PC-3 (cell line): ENCODE measurements at regions of chr13 and their contacts with region 1.

Region 1: GRCh38 chr13:68439821-68440220 is 1209.7 kb upstream of the PCDH9 start:
- DNase-seq: peak; percentile 85
- ATAC-seq: peak; percentile 90
- H3K4me3 ChIP-seq: no peak overlapping the region
- H3K27ac ChIP-seq: no peak overlapping the region
- H3K4me1 ChIP-seq: peaks cover 17% of the 10 kb centered on the region
- H3K27me3 ChIP-seq: no peaks in the 10 kb centered on the region
- CTCF ChIP-seq: no peak

Region 2: DNA sequence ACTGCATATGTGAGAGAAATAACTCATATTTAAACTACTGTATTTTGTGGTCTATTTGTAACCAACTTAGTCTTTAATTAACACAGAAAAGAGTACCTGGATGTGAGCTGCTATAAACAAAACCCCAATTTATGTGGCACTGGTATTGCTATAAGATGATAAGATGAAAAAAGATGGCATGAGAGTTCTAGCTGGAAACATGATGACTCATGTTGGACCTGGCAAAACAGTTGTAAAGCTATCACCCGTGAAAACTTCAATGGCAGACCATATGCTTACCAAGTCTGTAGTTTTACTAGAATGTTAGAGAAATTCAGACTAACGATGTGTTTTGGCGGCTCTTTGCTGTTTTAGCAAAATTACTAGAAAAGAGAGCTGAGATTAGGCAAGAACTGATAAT is 1140.1 kb before region 1 on chr13:
- CTCF ChIA-PET with region 1: no interaction called
- POLR2A ChIA-PET with region 1: no interaction called
- intact Hi-C with region 1: loop called (anchors 10 kb)
- DNase-seq: peak; percentile 6
- ATAC-seq: no peak
- H3K4me3 ChIP-seq: no peak overlapping the region
- H3K27ac ChIP-seq: peak overlapping the region; percentile 39
- H3K4me1 ChIP-seq: peaks cover 18% of the 10 kb centered on the region; the same call in 1 of the 2 replicates
- H3K27me3 ChIP-seq: no peaks in the 10 kb centered on the region
- CTCF ChIP-seq: no peak

Region 3: GRCh38 chr13:68369739-68370138 is 70.1 kb before region 1 on chr13:
- CTCF ChIA-PET with region 1: no interaction called
- POLR2A ChIA-PET with region 1: no interaction called
- intact Hi-C with region 1: loop called (anchors 2 kb)
- DNase-seq: peak; percentile 68
- ATAC-seq: peak; percentile 99
- H3K4me3 ChIP-seq: no peak overlapping the region
- H3K27ac ChIP-seq: peak overlapping the region; percentile 73
- H3K4me1 ChIP-seq: peaks cover 22% of the 10 kb centered on the region; the same call in 1 of the 2 replicates
- H3K27me3 ChIP-seq: no peaks in the 10 kb centered on the region
- CTCF ChIP-seq: no peak

Region 4: DNA sequence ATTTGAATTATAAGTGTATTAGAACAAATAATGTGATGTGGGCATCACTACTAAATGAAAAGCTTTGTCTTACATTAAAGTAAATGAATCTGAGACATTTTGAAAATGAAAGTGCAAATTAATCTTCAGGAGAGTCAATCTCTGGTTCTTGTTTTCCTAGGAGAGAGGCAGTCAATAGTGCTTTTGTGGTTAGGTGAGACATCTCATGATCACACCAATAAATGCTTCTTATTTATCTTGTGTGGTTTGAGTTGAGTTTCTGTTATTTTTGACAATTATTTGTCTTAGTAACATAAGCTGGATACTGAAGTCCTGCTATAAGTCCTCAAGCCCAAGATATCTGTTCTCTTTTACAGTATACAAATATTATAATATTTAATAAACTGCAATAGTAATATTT is 168.3 kb after region 1 on chr13:
- CTCF ChIA-PET with region 1: no interaction called
- POLR2A ChIA-PET with region 1: no interaction called
- intact Hi-C with region 1: loop called (anchors 10 kb)
- DNase-seq: peak; percentile 48
- ATAC-seq: peak; percentile 96
- H3K4me3 ChIP-seq: no peak overlapping the region
- H3K27ac ChIP-seq: no peak overlapping the region
- H3K4me1 ChIP-seq: no peaks in the 10 kb centered on the region
- H3K27me3 ChIP-seq: no peaks in the 10 kb centered on the region
- CTCF ChIP-seq: no peak